ENCODE measurements at regions of chr21 and their contacts with region 1.

Region 1: DNA sequence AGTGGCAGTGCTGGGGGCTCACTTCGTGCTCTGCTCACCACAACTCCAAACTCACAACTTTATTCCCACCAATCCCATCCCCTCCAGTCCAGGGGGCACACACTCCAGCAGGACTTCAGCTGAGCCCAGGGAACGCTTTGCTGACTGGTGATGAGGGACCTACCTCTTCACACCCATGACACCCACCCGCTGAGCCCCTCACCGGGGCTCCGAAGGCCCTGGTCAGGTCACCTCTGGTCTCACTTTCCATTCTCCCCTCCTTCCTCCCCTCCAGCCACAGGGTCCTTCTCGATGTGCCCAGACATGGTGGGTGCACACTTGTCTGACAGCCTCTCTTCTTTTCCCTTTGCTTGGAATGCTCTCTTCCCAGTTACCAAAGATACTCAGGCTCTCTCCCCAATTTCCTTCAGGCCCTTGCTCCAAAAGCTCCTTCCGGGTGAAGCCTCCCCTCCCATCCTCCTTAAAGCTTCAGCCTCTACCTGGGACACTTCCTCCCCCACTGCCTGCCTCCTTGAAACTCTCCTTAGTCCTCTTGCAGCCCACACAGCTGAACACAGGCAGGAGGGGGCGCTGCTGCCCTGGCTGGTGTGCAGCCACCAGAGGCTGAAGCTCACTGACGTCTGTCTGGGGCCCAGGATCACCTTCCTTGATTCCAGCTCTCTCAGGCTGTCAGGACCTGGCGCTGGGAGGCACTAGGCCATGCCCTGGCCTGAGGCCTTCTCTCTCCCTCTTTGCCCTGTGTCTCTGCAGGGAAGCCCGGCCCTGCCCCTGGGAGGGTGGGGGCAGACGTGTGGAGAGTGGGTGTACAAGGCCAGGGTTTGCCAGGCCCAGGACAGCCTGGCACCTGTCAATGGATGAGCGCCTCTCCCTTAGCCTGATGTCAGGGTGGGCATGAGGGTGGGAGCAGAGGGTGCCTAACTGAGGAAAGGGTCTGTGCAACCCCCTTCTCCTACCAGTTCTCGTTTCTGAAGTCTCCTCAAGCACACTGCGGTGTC is 1.6 kb downstream of the KCNE1 start:
- DNase-seq: peak in 3 of 9 donors; percentile 4 to 64 (median 26)
- ATAC-seq: peak; percentile 72
- H3K4me3 ChIP-seq: no peak overlapping the region
- H3K4me3 Mint-ChIP-seq: no peak overlapping the region
- H3K27ac ChIP-seq: no peak overlapping the region
- H3K27ac Mint-ChIP-seq: peak overlapping the region in 1 of 9 donors; percentile 6
- H3K4me1 ChIP-seq: no peaks in the 10 kb centered on the region
- H3K4me1 Mint-ChIP-seq: peaks cover 0 to 8% (median 0%) of the 10 kb centered on the region in 7 donors
- H3K27me3 ChIP-seq: no peaks in the 10 kb centered on the region
- H3K27me3 Mint-ChIP-seq: peaks cover 0 to 6% (median 5%) of the 10 kb centered on the region in 5 donors

Region 2: DNA sequence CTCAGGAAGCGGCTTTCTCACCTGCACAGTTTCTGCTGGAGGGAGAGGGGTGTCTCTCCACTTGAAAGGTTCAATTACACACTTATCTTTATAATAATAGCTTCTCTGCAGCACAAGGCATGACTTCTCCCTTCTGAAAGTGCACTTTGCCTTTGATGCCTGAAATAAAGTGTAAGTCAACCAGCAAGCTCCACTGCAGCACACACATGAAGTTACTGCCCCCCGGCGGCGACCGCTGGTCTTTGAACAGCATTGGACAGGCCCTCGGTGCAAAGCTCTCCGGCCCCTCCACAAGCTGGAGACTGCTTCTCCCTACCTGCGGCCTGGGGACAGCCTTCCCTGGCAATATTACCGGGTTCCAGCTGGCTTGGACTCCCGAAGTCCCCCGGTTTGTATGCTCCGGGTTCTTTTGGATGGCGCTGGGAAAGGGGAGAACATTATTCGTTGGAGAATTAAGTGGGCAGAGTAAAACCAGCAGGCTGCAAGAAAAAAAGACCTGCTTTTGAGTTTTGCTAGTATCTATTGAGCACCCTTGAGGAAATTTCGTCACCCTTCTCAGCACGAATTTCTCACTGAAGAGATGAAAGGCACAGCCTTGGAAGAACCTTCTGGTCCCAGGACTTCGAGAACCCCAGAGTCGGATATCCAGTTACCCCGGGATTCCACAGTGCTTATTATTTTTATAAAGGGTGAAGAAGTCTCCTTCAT is 92.7 kb after region 1 on chr21:
- CTCF ChIA-PET with region 1: interaction called, 3 read pairs
- POLR2A ChIA-PET with region 1: no interaction called
- intact Hi-C with region 1: loop called in 1 of 2 experiments (anchors 1 kb)
- DNase-seq: peak; percentile 24 to 67 (median 40)
- ATAC-seq: peak; percentile 74
- H3K4me3 ChIP-seq: no peak overlapping the region
- H3K4me3 Mint-ChIP-seq: no peak overlapping the region
- H3K27ac ChIP-seq: no peak overlapping the region
- H3K27ac Mint-ChIP-seq: peak overlapping the region in 1 of 9 donors; percentile 11
- H3K4me1 ChIP-seq: no peaks in the 10 kb centered on the region
- H3K4me1 Mint-ChIP-seq: peaks cover 0 to 4% (median 0%) of the 10 kb centered on the region in 7 donors
- H3K27me3 ChIP-seq: no peaks in the 10 kb centered on the region
- H3K27me3 Mint-ChIP-seq: peaks cover 0 to 7% (median 0%) of the 10 kb centered on the region in 5 donors

Region 3: DNA sequence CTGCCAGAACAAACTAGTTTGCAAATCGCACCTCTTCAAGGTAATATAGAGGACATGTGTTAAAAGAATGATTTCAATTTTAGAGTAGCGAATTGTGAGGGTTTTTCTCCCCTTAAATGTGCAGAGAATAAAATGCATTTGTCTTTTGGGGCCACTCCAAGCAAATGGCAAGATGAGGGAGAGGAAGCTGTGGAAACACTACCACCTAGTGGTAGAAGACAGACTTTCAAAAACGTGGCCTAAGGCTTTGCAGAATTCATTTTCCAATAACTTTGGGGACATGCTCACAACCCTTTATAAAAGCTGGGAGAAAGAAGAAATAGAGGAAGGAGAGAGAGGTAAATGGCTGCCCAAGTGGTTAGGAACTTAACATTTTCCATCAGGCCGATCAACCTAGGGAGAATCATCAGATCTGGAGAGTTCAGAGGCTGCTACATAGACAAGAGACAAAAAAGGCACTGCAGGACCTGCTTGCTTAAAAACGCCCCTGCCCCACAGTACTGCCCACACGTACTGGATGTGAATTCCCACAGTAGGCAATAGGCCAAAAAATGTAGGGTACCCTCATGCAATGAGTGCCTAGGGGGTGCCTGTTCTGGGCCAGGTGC is 120.2 kb after region 1 on chr21:
- CTCF ChIA-PET with region 1: interaction called, 5 read pairs
- POLR2A ChIA-PET with region 1: no interaction called
- intact Hi-C with region 1: loop called in 1 of 2 experiments (anchors 1 kb)
- DNase-seq: peak in 7 of 9 donors; percentile 23 to 65 (median 52)
- ATAC-seq: peak; percentile 77
- H3K4me3 ChIP-seq: no peak overlapping the region
- H3K4me3 Mint-ChIP-seq: no peak overlapping the region
- H3K27ac ChIP-seq: no peak overlapping the region
- H3K27ac Mint-ChIP-seq: no peak overlapping the region
- H3K4me1 ChIP-seq: no peaks in the 10 kb centered on the region
- H3K4me1 Mint-ChIP-seq: no peaks in the 10 kb centered on the region
- H3K27me3 ChIP-seq: no peaks in the 10 kb centered on the region
- H3K27me3 Mint-ChIP-seq: peaks cover 5 to 22% (median 14%) of the 10 kb centered on the region in 5 donors

Region 4: DNA sequence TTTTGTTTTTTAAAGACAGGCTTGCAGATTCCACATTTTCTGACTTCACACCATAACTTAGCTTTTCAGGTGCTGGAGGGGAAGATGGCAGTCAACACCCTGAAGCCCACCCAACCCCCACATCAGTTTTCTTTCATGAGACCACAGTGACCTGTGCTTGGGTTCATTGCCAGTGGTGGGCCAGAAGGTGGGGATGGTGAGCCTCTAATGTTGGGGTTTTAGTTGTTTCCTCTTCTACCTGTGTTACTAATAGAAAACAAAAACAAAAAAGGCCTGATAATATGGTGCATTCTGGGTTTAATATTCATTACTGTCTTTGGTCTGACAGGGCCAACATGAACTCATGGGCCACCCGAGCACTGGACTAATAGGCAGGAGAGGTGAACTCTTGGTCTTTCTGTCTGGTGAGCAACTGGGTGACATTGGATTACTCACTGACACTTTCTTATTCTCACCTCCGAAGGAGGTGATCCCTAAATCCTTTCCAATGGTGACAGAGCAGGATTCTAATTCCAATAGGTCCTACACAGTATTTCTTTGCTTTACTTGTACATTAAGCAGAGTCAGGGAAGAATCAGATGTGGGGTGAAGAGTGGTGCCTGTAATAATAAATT is 291.2 kb after region 1 on chr21:
- CTCF ChIA-PET with region 1: no interaction called
- POLR2A ChIA-PET with region 1: no interaction called
- intact Hi-C with region 1: no loop called
- DNase-seq: no peak
- ATAC-seq: peak; percentile 48
- H3K4me3 ChIP-seq: no peak overlapping the region
- H3K4me3 Mint-ChIP-seq: no peak overlapping the region
- H3K27ac ChIP-seq: no peak overlapping the region
- H3K27ac Mint-ChIP-seq: peak overlapping the region in 8 of 9 donors; percentile 22 to 84 (median 68)
- H3K4me1 ChIP-seq: no peaks in the 10 kb centered on the region
- H3K4me1 Mint-ChIP-seq: peaks cover 18 to 44% (median 32%) of the 10 kb centered on the region in 7 donors
- H3K27me3 ChIP-seq: no peaks in the 10 kb centered on the region
- H3K27me3 Mint-ChIP-seq: no peaks in the 10 kb centered on the region

Region 5: DNA sequence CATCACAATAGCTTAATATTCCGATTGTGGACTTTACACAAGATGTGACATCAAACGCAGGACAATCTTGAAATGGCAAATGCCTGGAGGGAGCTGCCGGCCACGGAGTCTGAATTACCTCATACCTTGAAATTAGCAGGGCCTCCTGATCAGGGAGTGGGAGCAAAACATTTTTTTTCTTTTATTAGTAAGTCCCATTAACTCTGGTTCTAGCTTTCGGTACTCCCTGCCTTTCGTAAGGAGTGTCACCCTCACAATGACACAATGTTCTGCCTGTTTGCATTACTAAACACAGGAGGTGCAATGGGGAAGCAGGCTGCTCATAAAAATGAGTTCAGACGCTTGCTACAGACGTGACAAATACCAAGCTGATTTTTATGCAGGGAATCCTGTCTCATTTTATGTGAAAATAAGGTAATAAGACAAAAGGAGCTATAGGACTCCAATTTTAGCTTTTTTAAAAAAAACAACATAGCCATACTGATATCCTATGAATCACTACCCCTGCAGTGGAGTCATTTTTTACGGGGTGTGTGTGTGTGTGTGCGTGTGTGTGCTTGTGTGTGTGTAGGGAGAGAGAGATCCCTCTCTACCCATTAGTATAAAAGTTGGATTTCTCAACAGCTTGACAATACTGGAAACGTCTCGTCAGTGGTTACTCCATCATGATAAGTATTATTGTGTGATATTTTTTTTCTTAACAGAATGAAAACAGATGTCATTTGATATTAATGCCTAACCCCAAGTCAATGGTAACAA is 743.7 kb after region 1 on chr21:
- CTCF ChIA-PET with region 1: no interaction called
- POLR2A ChIA-PET with region 1: no interaction called
- intact Hi-C with region 1: no loop called
- DNase-seq: no peak
- ATAC-seq: no peak
- H3K4me3 ChIP-seq: no peak overlapping the region
- H3K4me3 Mint-ChIP-seq: no peak overlapping the region
- H3K27ac ChIP-seq: no peak overlapping the region
- H3K27ac Mint-ChIP-seq: no peak overlapping the region
- H3K4me1 ChIP-seq: no peaks in the 10 kb centered on the region
- H3K4me1 Mint-ChIP-seq: no peaks in the 10 kb centered on the region
- H3K27me3 ChIP-seq: no peaks in the 10 kb centered on the region
- H3K27me3 Mint-ChIP-seq: peaks cover 0 to 2% (median 0%) of the 10 kb centered on the region in 5 donors

Measured in naive thymus-derived CD4-positive, alpha-beta T cell (primary cell).